ENCODE measurements at regions of chrX and their contacts with region 1.

Region 1: GRCh38 chrX:73562984-73563737 is at the start of gene CHIC1:
- DNase-seq: peak; percentile 46 to 88 (median 67)
- ATAC-seq: peak; percentile 69
- H3K4me3 ChIP-seq: peak within 1 kb of the TSS; percentile 71 to 74
- H3K4me3 Mint-ChIP-seq: peak within 1 kb of the TSS; percentile 97
- H3K27ac ChIP-seq: peak within 1 kb of the TSS; percentile 78 to 93
- H3K27ac Mint-ChIP-seq: peak within 1 kb of the TSS; percentile 99
- H3K4me1 ChIP-seq: peaks cover 9% of the 10 kb centered on the region
- H3K4me1 Mint-ChIP-seq: peaks cover 32% of the 10 kb centered on the region
- H3K27me3 ChIP-seq: no peaks in the 10 kb centered on the region
- H3K27me3 Mint-ChIP-seq: no peaks in the 10 kb centered on the region
- CTCF ChIP-seq: no peak
- total RNA-seq, gene CHIC1: 5.0 to 5.4 TPM

Region 2: DNA sequence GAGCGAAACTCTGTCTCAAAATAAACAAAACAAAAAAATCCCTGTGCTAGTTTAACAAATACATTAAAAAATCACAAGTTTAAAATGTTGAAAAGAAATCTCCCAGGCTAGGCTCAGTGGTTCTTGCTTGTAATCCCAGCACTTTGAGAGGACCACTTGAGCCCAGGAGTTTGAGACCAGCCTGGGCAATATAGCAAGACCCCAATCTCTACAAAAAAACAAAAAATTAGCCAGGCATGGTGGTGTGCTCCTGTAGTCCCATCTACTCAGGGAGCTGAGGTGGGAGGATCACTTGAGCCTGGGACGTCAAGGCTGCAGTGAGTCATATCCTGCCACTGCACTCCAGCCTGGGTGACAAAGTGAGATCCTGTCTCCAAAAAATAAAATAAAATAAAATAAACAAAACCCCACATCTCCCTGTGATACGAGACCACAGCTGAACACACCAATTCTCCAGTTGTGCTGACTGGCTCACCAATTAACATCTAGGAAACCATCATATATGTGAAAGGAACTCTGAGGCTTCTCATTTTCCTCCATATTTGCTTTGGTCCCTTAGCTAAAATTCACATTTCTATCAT is 1293.4 kb before region 1 on chrX:
- CTCF ChIA-PET with region 1: no interaction called
- POLR2A ChIA-PET with region 1: no interaction called
- intact Hi-C with region 1: loop called in 1 of 2 experiments (anchors 10 kb)
- DNase-seq: peak in 5 of 9 experiments; percentile 13 to 43 (median 20)
- ATAC-seq: peak; percentile 57
- H3K4me3 ChIP-seq: no peak overlapping the region
- H3K4me3 Mint-ChIP-seq: no peak overlapping the region
- H3K27ac ChIP-seq: no peak overlapping the region
- H3K27ac Mint-ChIP-seq: peak overlapping the region; percentile 69
- H3K4me1 ChIP-seq: peaks cover 12% of the 10 kb centered on the region
- H3K4me1 Mint-ChIP-seq: peaks cover 32% of the 10 kb centered on the region
- H3K27me3 ChIP-seq: no peaks in the 10 kb centered on the region
- H3K27me3 Mint-ChIP-seq: no peaks in the 10 kb centered on the region
- CTCF ChIP-seq: no peak

Region 3: DNA sequence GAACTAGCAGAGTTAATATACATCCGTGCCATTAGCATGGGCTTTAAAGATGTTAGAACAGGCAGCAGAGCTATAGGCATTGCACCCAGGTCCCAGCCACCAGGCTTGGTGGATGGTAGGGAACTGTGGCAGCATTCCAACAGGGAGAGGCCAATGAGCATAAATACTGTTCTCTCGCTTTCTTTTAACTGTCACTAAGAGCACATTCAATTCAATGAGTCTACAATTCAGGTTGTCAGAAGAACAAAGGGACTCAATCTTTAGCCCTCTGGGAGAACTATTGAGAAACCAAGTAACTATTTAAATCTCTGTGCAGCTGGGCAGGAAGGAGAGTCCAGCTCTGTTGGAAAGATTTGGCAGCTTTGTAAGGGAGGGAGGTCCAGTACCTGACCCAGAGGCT is 165.4 kb after region 1 on chrX:
- CTCF ChIA-PET with region 1: no interaction called
- POLR2A ChIA-PET with region 1: no interaction called
- intact Hi-C with region 1: no loop called
- DNase-seq: no peak
- ATAC-seq: no peak
- H3K4me3 ChIP-seq: no peak overlapping the region
- H3K4me3 Mint-ChIP-seq: no peak overlapping the region
- H3K27ac ChIP-seq: no peak overlapping the region
- H3K27ac Mint-ChIP-seq: no peak overlapping the region
- H3K4me1 ChIP-seq: no peaks in the 10 kb centered on the region
- H3K4me1 Mint-ChIP-seq: no peaks in the 10 kb centered on the region
- H3K27me3 ChIP-seq: no peaks in the 10 kb centered on the region
- H3K27me3 Mint-ChIP-seq: peaks cover 3% of the 10 kb centered on the region
- CTCF ChIP-seq: no peak